Endothelial cell of umbilical vein (primary cell): ENCODE measurements at regions of chr21 and their contacts with region 1.

Region 1: GRCh38 chr21:23968722-23969647 is 1638.3 kb downstream of the MRPL39 start:
- DNase-seq: peak; percentile 51
- H3K4me3 ChIP-seq: no peak overlapping the region
- H3K27ac ChIP-seq: no peak overlapping the region
- H3K4me1 ChIP-seq: no peaks in the 10 kb centered on the region
- H3K27me3 ChIP-seq: no peaks in the 10 kb centered on the region
- CTCF ChIP-seq: peak; percentile 33 to 55
- POLR2A ChIP-seq: no peak

Region 2: DNA sequence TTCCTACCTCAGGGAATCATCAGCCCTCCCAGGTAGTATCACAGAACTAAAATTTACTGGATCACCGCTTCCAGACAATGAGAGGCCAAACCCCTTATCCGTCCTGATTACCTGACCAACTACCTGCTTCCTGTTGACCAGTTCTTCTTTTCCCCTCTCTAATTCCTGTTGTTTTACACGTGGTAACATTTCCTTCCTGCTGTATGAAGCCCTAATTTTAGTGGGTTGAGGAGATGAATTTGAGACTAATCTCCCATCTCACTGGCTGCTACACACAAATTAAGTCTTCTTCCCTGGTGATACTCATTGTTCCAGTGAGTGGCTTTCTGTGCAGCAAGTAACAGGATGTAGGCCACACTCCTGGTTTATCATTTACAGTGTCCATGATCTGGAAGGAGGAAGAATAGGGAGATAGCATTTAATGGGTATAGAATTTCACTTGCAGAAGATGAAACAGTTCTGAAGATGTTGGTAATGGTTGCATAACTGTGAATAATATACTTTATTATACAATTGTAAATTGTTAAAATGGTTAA is 857.8 kb before region 1 on chr21:
- CTCF ChIA-PET with region 1: no interaction called
- POLR2A ChIA-PET with region 1: no interaction called
- dilution Hi-C with region 1: no loop called
- intact Hi-C with region 1: no loop called
- DNase-seq: no peak
- H3K4me3 ChIP-seq: no peak overlapping the region
- H3K27ac ChIP-seq: no peak overlapping the region
- H3K4me1 ChIP-seq: no peaks in the 10 kb centered on the region
- H3K27me3 ChIP-seq: no peaks in the 10 kb centered on the region
- CTCF ChIP-seq: no peak
- POLR2A ChIP-seq: no peak

Region 3: GRCh38 chr21:23401278-23401677 is 567.7 kb before region 1 on chr21:
- CTCF ChIA-PET with region 1: no interaction called
- POLR2A ChIA-PET with region 1: no interaction called
- dilution Hi-C with region 1: no loop called
- intact Hi-C with region 1: loop called (anchors 2 kb)
- DNase-seq: peak; percentile 51
- H3K4me3 ChIP-seq: no peak overlapping the region
- H3K27ac ChIP-seq: no peak overlapping the region
- H3K4me1 ChIP-seq: no peaks in the 10 kb centered on the region
- H3K27me3 ChIP-seq: no peaks in the 10 kb centered on the region
- CTCF ChIP-seq: peak; percentile 28 to 32
- POLR2A ChIP-seq: no peak

Region 4: DNA sequence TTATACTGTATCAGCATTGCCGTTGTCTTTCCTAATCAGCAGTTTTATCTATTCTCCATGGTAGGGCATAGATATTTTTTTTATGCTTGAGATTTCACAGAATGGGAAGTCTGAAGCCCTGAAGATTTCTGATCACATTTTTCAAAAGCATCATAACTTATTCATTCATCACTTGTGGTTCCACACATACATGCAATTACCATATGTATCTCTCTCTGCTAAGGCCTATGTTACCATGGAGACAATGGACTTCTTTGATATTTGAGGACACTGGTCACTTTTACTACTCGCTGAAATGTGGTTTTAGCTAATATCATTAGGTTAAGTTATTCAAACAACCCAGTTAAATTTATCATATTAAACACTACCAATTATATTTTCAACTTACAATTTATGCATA is 188.7 kb before region 1 on chr21:
- CTCF ChIA-PET with region 1: no interaction called
- POLR2A ChIA-PET with region 1: no interaction called
- dilution Hi-C with region 1: no loop called
- intact Hi-C with region 1: no loop called
- DNase-seq: no peak
- H3K4me3 ChIP-seq: no peak overlapping the region
- H3K27ac ChIP-seq: no peak overlapping the region
- H3K4me1 ChIP-seq: no peaks in the 10 kb centered on the region
- H3K27me3 ChIP-seq: no peaks in the 10 kb centered on the region
- CTCF ChIP-seq: no peak
- POLR2A ChIP-seq: no peak

Region 5: GRCh38 chr21:23801292-23801691 is 167.7 kb before region 1 on chr21:
- CTCF ChIA-PET with region 1: no interaction called
- POLR2A ChIA-PET with region 1: no interaction called
- dilution Hi-C with region 1: no loop called
- intact Hi-C with region 1: no loop called
- DNase-seq: no peak
- H3K4me3 ChIP-seq: no peak overlapping the region
- H3K27ac ChIP-seq: no peak overlapping the region
- H3K4me1 ChIP-seq: no peaks in the 10 kb centered on the region
- H3K27me3 ChIP-seq: no peaks in the 10 kb centered on the region
- CTCF ChIP-seq: no peak
- POLR2A ChIP-seq: no peak

Region 6: GRCh38 chr21:23853796-23854379 is 115.1 kb before region 1 on chr21:
- CTCF ChIA-PET with region 1: interaction called, 15 read pairs
- POLR2A ChIA-PET with region 1: no interaction called
- dilution Hi-C with region 1: no loop called
- intact Hi-C with region 1: loop called (anchors 1 kb)
- DNase-seq: peak; percentile 24
- H3K4me3 ChIP-seq: no peak overlapping the region
- H3K27ac ChIP-seq: no peak overlapping the region
- H3K4me1 ChIP-seq: no peaks in the 10 kb centered on the region
- H3K27me3 ChIP-seq: no peaks in the 10 kb centered on the region
- CTCF ChIP-seq: peak in 1 of 2 donors; percentile 6
- POLR2A ChIP-seq: no peak

Region 7: GRCh38 chr21:23982546-23982945 is 13.6 kb after region 1 on chr21:
- CTCF ChIA-PET with region 1: no interaction called
- POLR2A ChIA-PET with region 1: no interaction called
- dilution Hi-C with region 1: no loop called
- intact Hi-C with region 1: no loop called
- DNase-seq: no peak
- H3K4me3 ChIP-seq: no peak overlapping the region
- H3K27ac ChIP-seq: no peak overlapping the region
- H3K4me1 ChIP-seq: no peaks in the 10 kb centered on the region
- H3K27me3 ChIP-seq: no peaks in the 10 kb centered on the region
- CTCF ChIP-seq: no peak
- POLR2A ChIP-seq: no peak

Region 8: GRCh38 chr21:25385911-25386474 is 1417.0 kb after region 1 on chr21:
- CTCF ChIA-PET with region 1: interaction called, 3 read pairs
- POLR2A ChIA-PET with region 1: no interaction called
- dilution Hi-C with region 1: no loop called
- intact Hi-C with region 1: loop called (anchors 2 kb)
- DNase-seq: peak; percentile 50
- H3K4me3 ChIP-seq: no peak overlapping the region
- H3K27ac ChIP-seq: no peak overlapping the region
- H3K4me1 ChIP-seq: no peaks in the 10 kb centered on the region
- H3K27me3 ChIP-seq: peaks cover 0 to 1% of the 10 kb centered on the region in 2 experiments
- CTCF ChIP-seq: peak; percentile 45 to 53
- POLR2A ChIP-seq: no peak